Mammary epithelial cell (primary cell): ENCODE measurements at regions of chr11 and their contacts with region 1.

Region 1: DNA sequence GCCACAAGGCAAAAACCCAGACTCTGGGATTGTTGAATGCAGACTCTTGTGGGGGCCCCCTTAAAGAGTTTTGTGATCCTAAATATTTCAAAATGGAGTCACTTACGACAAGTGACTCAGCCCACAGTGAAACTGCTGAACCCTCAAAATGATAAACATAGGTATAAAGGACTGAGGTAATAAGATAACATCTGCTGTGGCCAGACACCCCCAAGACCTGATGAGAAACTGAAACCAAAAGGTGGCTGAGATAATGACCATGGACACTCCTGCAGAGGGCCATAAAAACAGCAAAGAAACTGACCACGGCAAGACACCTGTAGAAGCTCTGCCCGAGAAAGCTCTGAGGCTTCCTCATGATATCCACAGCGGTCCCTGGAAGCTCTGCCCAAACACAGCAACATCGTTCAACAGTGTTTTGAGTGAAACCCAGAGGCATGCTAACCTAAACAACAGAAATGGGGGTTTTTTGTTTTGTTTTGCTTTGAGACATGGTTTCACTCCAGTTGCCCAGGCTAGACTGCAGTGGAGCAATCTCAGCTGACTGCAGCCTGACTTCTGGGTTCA is 1.6 kb upstream of the PLAAT4 start:
- DNase-seq: no peak
- H3K4me3 ChIP-seq: no peak overlapping the region
- H3K27ac ChIP-seq: no peak overlapping the region
- H3K4me1 ChIP-seq: peaks cover 18% of the 10 kb centered on the region
- H3K27me3 ChIP-seq: no peaks in the 10 kb centered on the region
- CTCF ChIP-seq: no peak

Region 2: DNA sequence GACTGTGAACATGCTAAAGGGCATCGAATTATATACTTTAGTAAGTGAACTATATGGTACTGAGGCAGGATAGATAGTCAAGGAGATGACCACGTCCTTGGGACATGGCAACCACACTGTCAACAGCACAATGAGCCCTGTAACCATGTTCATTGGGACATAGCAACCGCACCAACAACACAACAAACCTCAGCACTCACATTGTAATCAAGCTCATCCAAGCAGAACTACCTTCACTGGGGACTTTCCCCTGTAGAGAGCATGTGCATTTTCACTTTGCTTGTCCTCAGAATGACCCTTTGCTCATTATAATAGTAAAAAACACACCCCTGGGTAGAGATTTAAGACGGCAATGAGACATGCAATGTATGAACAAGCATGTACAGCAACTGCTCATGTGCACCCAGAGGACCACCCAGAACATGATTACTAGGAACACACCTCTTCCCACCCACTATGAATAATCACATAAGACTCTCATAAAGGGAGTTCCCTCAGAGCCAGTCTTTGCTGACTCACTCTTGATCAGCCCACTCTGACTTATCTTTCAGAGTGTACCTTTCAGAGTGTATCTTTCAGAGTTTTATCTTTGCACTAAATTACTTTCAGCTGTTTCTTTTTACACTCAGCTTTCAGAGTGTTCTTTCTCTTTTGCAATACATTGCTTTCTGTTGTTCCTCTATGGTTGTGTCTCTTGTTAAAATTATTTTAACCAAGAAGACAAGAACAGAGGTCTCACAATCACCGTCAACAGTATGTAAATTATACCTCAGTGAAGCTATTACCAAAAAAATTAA is 32.3 kb after region 1 on chr11:
- CTCF ChIA-PET with region 1: no interaction called
- dilution Hi-C with region 1: no loop called
- in situ Hi-C with region 1: no loop called
- intact Hi-C with region 1: loop called (anchors 5 kb)
- DNase-seq: peak; percentile 95
- H3K4me3 ChIP-seq: peak overlapping the region in 1 of 3 experiments; percentile 37
- H3K27ac ChIP-seq: peak overlapping the region; percentile 100
- H3K4me1 ChIP-seq: peaks cover 43% of the 10 kb centered on the region
- H3K27me3 ChIP-seq: no peaks in the 10 kb centered on the region
- CTCF ChIP-seq: no peak

Region 3: DNA sequence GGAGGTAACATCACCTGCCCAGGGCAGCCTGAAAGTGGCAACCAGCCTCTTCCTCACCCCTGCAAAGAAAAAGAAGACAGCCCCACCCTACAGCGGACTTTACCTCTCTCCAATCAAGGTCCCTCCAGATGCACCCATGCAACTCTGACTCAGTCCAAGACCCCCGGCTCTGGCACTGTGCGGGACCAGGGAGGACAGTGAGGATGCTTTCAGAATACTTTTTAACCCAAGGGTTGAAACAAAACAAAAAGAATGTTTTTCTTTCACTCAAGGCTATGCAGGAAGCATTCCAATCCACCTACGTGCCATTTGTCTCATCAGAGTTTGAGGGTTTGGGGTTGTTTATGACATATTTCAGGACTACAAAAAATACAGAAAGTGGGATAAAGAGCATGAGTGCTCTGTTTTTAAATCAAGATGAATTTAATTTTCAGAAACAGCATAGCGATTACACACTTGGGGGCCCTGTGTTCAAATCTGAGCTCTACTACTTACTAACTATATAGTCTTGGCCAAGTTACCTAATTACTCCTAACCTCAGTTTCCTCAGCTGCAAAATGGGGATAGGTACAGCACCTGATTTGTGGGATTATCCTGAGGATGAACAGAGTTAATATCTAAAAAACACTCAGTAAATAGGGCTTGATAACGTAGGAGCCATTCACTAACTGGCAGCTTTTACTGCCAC is 73.5 kb after region 1 on chr11:
- CTCF ChIA-PET with region 1: no interaction called
- dilution Hi-C with region 1: no loop called
- in situ Hi-C with region 1: no loop called
- intact Hi-C with region 1: loop called (anchors 2 kb)
- DNase-seq: peak; percentile 72
- H3K4me3 ChIP-seq: no peak overlapping the region
- H3K27ac ChIP-seq: peak overlapping the region; percentile 40
- H3K4me1 ChIP-seq: peaks cover 31% of the 10 kb centered on the region
- H3K27me3 ChIP-seq: no peaks in the 10 kb centered on the region
- CTCF ChIP-seq: no peak